Posterior cingulate gyrus (tissue), 11 donors: ENCODE measurements at regions of chr7 and their contacts with region 1.

Region 1: GRCh38 chr7:106285051-106285854 is 470 bp upstream of the NAMPT start:
- DNase-seq: peak; percentile 88 to 99 (median 92)

Region 2: DNA sequence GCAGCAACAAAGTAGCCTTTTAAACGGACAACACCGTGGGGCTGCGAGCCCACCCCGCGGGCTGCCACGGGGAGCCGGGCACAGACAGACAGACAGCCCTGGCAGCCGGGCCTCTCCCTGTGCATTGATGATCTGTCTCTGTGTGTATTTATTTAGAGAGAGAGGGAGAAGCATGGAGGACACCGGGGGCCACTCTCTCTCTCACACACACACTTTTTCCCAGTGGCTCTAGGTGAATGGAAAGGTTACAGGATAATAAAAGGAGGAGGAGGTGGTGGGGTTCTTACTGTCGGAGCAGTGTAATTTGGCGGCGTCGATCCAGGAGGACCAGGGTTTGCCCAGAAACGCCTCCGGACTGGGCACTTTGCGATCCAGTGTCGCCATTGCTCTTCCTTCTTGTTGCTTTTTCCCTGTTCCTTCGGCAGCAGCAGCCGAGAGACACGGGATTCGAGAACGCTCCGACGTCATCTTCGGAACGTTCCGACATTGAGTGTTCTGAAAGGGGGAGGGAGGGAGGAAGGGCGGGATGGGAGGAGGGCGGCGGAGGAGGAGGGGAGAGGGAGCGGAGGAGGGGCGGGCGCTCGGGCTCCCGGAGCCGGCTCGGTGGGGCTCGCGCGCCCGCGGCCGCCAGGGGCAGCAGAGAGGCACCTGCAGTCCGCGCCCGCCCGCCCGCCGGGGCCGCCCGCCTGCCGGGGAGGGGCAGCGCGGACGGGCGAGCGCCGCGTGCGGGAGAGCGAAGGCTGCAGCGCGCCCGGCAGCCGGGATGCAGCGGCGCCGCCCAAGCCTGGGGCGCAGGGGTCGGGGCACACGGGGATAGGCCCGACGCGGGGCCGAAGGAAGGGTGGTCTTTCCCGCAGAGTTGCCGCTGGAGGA is 408.9 kb before region 1 on chr7 and contains the start of gene ATXN7L1:
- intact Hi-C with region 1: loop called (anchors 10 kb)
- DNase-seq: peak; percentile 85 to 99 (median 92)

Region 3: GRCh38 chr7:106112117-106112971 is 172.9 kb before region 1 on chr7 and contains the start of gene SYPL1:
- intact Hi-C with region 1: loop called (anchors 10 kb)
- DNase-seq: peak; percentile 78 to 97 (median 84)

Region 4: DNA sequence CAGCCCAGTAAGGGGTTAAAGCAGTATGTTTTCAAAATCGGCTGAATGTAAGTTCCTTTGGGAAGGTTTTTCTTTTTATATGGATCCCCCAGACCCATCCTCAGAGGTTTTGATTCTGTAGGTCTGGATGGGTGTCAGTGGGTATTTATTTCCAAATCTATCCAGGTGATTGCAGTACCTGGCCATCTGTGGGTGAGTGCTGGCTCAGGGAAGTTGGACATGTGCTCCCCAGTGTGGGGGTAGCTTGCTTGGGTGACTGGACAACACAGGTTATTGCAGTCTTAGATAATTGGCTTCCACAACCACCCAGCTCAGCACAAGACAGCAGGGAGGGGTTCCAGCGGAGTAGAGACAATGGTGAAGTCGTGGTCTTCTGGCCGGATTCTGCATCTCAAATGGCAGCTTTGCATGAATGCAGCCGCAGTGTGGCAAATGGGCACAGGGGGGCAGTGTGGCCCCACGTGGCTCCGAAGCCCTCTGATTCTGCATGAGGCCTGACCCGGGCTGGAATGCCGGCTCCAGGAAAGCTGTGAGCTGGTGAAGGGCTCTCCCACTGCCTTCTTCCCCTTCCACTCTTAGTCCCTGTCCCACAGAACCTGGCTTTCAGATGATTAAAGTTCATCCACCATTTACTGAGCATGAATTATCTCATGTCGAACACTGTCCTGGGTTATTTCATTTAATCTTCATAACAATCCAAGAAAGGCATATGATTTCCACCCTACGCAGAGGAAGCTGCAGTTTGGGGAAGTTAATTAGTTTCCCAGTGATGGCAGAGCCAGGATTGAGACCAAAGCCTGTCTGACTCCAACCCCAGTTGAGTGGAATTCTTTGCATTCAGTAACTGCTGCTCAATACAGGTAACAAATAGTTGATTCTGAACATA is 108.6 kb before region 1 on chr7:
- intact Hi-C with region 1: loop called (anchors 5 kb)
- DNase-seq: peak; percentile 70 to 97 (median 86)

Region 5: GRCh38 chr7:106659963-106660861 is 375.0 kb after region 1 on chr7:
- intact Hi-C with region 1: loop called (anchors 5 kb)
- DNase-seq: peak; percentile 18 to 88 (median 46)

Region 6: GRCh38 chr7:107044347-107045194 is 759.3 kb after region 1 on chr7 and contains the start of gene PRKAR2B:
- intact Hi-C with region 1: loop called (anchors 5 kb)
- DNase-seq: peak; percentile 70 to 97 (median 80)